HepG2 (cell line): ENCODE measurements at regions of chr11 and their contacts with region 1.

Region 1: GRCh38 chr11:59822989-59823566 is 12.5 kb upstream of the MRPL16 start:
- DNase-seq: peak; percentile 63
- ATAC-seq: peak; percentile 87
- H3K4me3 ChIP-seq: no peak overlapping the region
- H3K27ac ChIP-seq: no peak overlapping the region
- H3K4me1 ChIP-seq: no peaks in the 10 kb centered on the region
- H3K27me3 ChIP-seq: no peaks in the 10 kb centered on the region
- CTCF ChIP-seq: peak; percentile 82
- EP300 ChIP-seq: no peak
- POLR2A ChIP-seq: no peak
- RAD21 ChIP-seq: peak; percentile 62

Region 2: GRCh38 chr11:59625703-59626102 is 197.4 kb before region 1 on chr11:
- CTCF ChIA-PET with region 1: no interaction called
- POLR2A ChIA-PET with region 1: no interaction called
- in situ Hi-C with region 1: no loop called
- intact Hi-C with region 1: no loop called
- DNase-seq: no peak
- ATAC-seq: no peak
- H3K4me3 ChIP-seq: no peak overlapping the region
- H3K27ac ChIP-seq: no peak overlapping the region
- H3K4me1 ChIP-seq: peaks cover 13% of the 10 kb centered on the region; the same call in 1 of the 2 replicates
- H3K27me3 ChIP-seq: no peaks in the 10 kb centered on the region
- CTCF ChIP-seq: no peak
- EP300 ChIP-seq: no peak
- POLR2A ChIP-seq: no peak
- RAD21 ChIP-seq: no peak

Region 3: GRCh38 chr11:59918987-59919589 is 96.0 kb after region 1 on chr11:
- CTCF ChIA-PET with region 1: interaction called, 5 read pairs
- POLR2A ChIA-PET with region 1: no interaction called
- in situ Hi-C with region 1: no loop called
- intact Hi-C with region 1: loop called (anchors 2 kb)
- DNase-seq: peak; percentile 18
- ATAC-seq: no peak
- H3K4me3 ChIP-seq: no peak overlapping the region
- H3K27ac ChIP-seq: no peak overlapping the region
- H3K4me1 ChIP-seq: no peaks in the 10 kb centered on the region
- H3K27me3 ChIP-seq: no peaks in the 10 kb centered on the region; a peak in 1 of 5 replicates
- CTCF ChIP-seq: peak; percentile 38
- EP300 ChIP-seq: no peak
- POLR2A ChIP-seq: no peak
- RAD21 ChIP-seq: no peak

Region 4: DNA sequence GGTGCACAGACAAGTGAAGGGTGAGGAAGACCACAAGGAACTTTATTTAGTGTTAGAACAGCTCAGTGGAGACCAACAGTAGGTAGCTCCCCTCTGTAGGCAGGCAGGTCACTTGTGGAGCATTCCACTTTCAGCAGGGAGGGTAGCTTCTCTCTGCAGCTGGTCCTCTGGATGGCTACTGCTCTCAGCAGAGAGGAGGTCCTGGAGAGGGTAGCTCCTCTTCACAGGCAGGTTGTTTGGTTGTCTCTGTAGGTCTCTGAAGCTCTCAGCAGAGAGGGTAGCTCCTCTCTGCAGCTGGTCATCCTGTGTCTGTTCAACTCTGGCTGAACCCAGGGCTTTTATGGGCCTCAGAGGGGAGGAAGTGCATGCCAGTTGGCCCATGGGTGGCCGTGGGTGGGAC is 108.6 kb after region 1 on chr11:
- CTCF ChIA-PET with region 1: no interaction called
- POLR2A ChIA-PET with region 1: no interaction called
- in situ Hi-C with region 1: no loop called
- intact Hi-C with region 1: no loop called
- DNase-seq: no peak
- ATAC-seq: no peak
- H3K4me3 ChIP-seq: no peak overlapping the region
- H3K27ac ChIP-seq: no peak overlapping the region
- H3K4me1 ChIP-seq: no peaks in the 10 kb centered on the region
- H3K27me3 ChIP-seq: peaks cover 0 to 1% of the 10 kb centered on the region in 2 experiments; a peak in 1 of 5 replicates
- CTCF ChIP-seq: no peak
- EP300 ChIP-seq: no peak
- POLR2A ChIP-seq: no peak
- RAD21 ChIP-seq: no peak

Region 5: DNA sequence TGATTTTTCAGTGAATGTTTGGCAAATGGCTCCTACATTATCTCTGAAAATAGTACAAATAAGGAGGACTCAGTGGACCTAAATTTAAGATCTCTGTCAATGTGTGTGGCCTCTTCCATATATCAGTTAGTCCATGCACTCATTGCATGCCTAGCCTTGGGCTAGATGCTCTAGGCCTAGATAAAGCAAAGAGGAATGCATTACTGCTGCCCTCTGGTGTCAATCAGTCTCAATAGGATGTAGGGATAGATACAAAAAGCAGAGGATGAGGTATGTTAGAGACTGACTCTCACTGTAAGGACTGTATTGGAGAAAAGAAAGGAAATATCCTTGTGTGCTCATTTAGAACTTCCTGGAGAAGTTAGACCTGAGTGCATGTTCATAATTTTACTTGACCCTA is 307.4 kb after region 1 on chr11:
- CTCF ChIA-PET with region 1: interaction called, 29 read pairs
- POLR2A ChIA-PET with region 1: no interaction called
- in situ Hi-C with region 1: loop called (anchors 5 kb)
- intact Hi-C with region 1: loop called (anchors 1 kb)
- DNase-seq: peak; percentile 55
- ATAC-seq: peak; percentile 96
- H3K4me3 ChIP-seq: no peak overlapping the region
- H3K27ac ChIP-seq: no peak overlapping the region
- H3K4me1 ChIP-seq: peaks cover 16% of the 10 kb centered on the region
- H3K27me3 ChIP-seq: no peaks in the 10 kb centered on the region
- CTCF ChIP-seq: peak; percentile 81
- EP300 ChIP-seq: no peak
- POLR2A ChIP-seq: no peak
- RAD21 ChIP-seq: peak; percentile 59

Region 6: DNA sequence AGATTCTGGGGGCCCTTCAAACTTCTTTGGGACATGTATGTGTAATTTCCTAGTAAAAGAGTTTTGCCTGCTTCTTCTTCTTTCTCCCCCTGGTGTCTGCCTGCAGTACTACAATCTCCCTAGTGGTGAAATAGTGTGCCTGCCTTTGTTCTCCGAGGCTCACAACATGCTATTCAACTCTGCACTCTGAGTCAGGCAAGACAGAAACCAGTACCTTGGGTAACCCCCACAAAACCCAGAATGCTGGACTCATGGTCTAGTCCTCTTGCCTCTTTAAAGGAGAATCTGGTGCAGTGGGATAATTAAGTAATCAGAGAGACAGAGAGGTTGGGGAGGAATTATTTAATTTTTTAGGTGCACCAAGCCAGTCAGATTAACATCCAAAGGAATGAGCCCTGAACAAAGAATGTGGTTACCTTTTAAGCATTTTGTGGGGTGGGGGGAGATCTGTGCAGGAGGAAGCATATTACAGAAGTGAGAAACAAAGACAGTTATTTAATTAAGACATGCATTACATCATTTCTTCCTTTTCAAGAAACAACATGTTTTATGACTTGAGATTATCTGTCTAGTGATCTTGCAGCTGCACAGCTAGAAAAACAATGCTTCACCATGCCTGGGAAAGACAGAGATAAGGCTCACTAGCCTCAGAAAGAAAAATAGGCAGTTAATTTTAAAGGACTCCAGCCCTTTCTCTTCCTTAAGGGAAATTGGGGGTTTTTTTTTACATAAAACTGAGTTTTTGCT is 370.8 kb after region 1 on chr11:
- CTCF ChIA-PET with region 1: interaction called, 18 read pairs
- POLR2A ChIA-PET with region 1: no interaction called
- in situ Hi-C with region 1: no loop called
- intact Hi-C with region 1: no loop called
- DNase-seq: peak; percentile 58
- ATAC-seq: peak; percentile 88
- H3K4me3 ChIP-seq: no peak overlapping the region
- H3K27ac ChIP-seq: no peak overlapping the region
- H3K4me1 ChIP-seq: no peaks in the 10 kb centered on the region
- H3K27me3 ChIP-seq: no peaks in the 10 kb centered on the region; a peak in 1 of 5 replicates
- CTCF ChIP-seq: peak; percentile 61
- EP300 ChIP-seq: no peak
- POLR2A ChIP-seq: no peak
- RAD21 ChIP-seq: no peak

Region 7: GRCh38 chr11:60251485-60252212 is 428.6 kb after region 1 on chr11:
- CTCF ChIA-PET with region 1: no interaction called
- POLR2A ChIA-PET with region 1: no interaction called
- in situ Hi-C with region 1: no loop called
- intact Hi-C with region 1: loop called (anchors 1 kb)
- DNase-seq: peak; percentile 23
- ATAC-seq: peak; percentile 62
- H3K4me3 ChIP-seq: no peak overlapping the region
- H3K27ac ChIP-seq: no peak overlapping the region
- H3K4me1 ChIP-seq: no peaks in the 10 kb centered on the region
- H3K27me3 ChIP-seq: no peaks in the 10 kb centered on the region; a peak in 1 of 5 replicates
- CTCF ChIP-seq: peak; percentile 63
- EP300 ChIP-seq: no peak
- POLR2A ChIP-seq: no peak
- RAD21 ChIP-seq: no peak